ENCODE measurements at regions of chr3 and their contacts with region 1.

Region 1: DNA sequence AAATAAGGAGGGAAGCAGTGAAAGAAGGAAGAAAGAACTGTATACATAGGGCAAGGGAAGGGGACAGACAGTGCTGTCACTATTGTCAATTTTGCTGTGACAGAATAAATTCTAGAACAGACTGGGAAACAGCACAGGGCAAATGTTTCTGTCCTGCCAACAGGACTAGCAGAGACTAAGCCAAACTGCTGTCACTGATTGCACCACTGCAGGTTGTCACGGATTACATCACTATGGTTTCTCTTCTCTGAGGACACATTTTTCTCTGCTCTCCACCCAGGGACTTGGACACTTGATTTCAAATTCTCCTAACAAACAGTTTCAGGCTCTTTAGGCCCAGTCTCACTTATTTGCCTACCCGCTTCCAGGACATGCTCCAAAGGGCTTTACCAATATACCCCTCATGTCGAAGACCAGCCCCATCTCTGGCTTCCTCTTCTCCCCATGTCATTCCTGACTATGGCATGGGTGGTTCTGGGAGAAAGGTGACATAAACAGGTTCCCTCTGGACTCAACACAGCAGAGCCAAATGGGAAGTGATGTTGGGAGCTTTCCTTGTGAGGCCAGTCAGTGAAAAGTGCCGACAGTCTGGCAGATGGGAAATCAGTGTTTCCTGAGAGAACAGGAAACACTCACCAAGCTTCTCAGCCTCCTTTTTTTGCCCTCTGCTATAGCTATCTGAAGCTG is 70.2 kb upstream of the ST3GAL6 start:
- DNase-seq: peak in 2 of 5 donors; percentile 40 to 52
- ATAC-seq: peak in 3 of 4 donors; percentile 89 to 91 (median 91)
- H3K4me3 ChIP-seq: no peak overlapping the region
- H3K27ac ChIP-seq: peak overlapping the region in 9 of 12 donors; percentile 43 to 79 (median 64)
- H3K4me1 ChIP-seq: peaks cover 0 to 14% (median 0%) of the 10 kb centered on the region in 12 donors
- H3K27me3 ChIP-seq: no peaks in the 10 kb centered on the region
- CTCF ChIP-seq: no peak
- POLR2A ChIP-seq: no peak

Region 2: DNA sequence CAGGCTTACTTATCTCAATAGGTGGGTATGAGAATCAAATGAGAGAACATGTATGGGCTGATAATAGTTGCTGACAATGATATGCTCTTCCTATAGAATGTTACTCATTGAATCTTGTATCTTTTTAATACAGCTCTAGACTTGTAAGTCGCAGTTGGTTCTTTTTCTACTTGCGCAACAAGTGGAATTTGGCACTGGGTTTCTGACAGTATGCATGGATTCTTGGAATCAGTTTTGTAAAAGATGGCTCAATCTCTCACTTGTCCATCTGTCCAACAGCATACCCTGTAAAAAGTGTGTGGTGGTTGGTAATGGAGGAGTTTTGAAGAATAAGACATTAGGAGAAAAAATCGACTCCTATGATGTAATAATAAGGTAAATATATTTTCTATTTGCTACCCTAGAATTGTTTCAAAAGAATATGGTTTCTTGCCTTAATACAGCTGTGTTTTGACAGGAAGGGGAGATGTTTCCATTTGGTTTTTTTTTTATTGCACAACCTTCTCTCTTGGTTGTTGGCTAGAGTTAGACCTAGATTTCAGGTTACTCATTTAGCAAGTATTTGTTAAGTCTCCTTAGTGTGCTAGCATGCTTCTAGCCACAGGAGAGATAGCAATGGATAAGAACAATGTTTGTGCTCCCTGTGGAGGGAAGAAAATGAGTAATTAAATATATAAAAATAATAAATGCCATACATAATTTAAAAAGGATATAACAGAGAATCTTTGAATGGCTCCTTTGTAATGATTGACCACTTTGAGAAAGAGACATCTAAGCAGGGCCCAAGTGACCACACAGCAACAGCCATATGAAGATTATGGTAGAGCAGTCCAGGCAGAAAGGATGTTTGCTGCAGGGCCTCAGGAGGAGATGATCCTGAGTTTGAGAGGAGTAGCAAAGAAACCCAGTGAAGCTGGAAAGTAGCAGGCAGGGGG is 92.0 kb after region 1 on chr3:
- intact Hi-C with region 1: loop called in 1 of 10 experiments (anchors 5 kb)
- DNase-seq: no peak
- ATAC-seq: peak in 3 of 4 donors; percentile 31 to 74 (median 50)
- H3K4me3 ChIP-seq: no peak overlapping the region
- H3K27ac ChIP-seq: peak overlapping the region; percentile 29 to 79 (median 52)
- H3K4me1 ChIP-seq: peaks cover 0 to 62% (median 48%) of the 10 kb centered on the region in 12 donors
- H3K27me3 ChIP-seq: no peaks in the 10 kb centered on the region
- CTCF ChIP-seq: no peak
- POLR2A ChIP-seq: no peak